Ascending aorta (tissue), 2 donors: ENCODE measurements at regions of chr3 and their contacts with region 1.

Region 1: GRCh38 chr3:11601446-11602238 is 42.1 kb downstream of the VGLL4 start:
- DNase-seq: peak; percentile 35 to 89
- H3K4me3 ChIP-seq: peak overlapping the region in 1 of 2 donors; percentile 37
- H3K27ac ChIP-seq: peak overlapping the region; percentile 85 to 91
- H3K4me1 ChIP-seq: peaks cover 14 to 51% of the 10 kb centered on the region in 2 donors
- H3K27me3 ChIP-seq: no peaks in the 10 kb centered on the region
- CTCF ChIP-seq: no peak

Region 2: DNA sequence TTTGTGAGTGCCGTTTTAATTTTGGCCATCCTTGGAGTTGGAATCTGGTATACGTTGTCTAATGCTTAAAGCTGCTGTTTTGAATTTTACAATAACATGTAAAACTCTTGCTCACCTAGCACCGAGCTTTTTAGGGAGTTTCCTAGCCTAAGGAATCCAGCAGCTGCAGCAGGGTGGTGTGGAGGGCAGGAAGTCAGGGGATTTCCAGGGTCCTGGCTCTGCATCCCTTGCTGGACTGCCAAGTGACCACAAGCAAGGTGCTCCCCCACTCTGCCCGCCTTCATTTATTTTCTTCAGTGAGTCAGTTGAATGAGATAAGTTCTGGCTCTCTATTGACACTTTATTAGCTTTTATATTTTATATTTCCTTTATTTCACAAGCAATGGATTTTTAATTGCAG is 215.8 kb before region 1 on chr3:
- intact Hi-C with region 1: loop called (anchors 5 kb)
- DNase-seq: no peak
- H3K4me3 ChIP-seq: no peak overlapping the region
- H3K27ac ChIP-seq: peak overlapping the region; percentile 13 to 24
- H3K4me1 ChIP-seq: peaks cover 0 to 32% of the 10 kb centered on the region in 2 donors
- H3K27me3 ChIP-seq: no peaks in the 10 kb centered on the region
- CTCF ChIP-seq: no peak

Region 3: GRCh38 chr3:11465744-11466616 is 135.7 kb before region 1 on chr3:
- intact Hi-C with region 1: loop called (anchors 5 kb)
- DNase-seq: peak in 1 of 2 donors; percentile 90
- H3K4me3 ChIP-seq: peak overlapping the region in 1 of 2 donors; percentile 32
- H3K27ac ChIP-seq: peak overlapping the region; percentile 91 to 92
- H3K4me1 ChIP-seq: peaks cover 4 to 33% of the 10 kb centered on the region in 2 donors
- H3K27me3 ChIP-seq: no peaks in the 10 kb centered on the region
- CTCF ChIP-seq: no peak

Region 4: GRCh38 chr3:11568503-11569155 is 33.0 kb before region 1 on chr3:
- intact Hi-C with region 1: loop called (anchors 1 kb)
- DNase-seq: peak; percentile 70 to 97
- H3K4me3 ChIP-seq: peak overlapping the region; percentile 29 to 54
- H3K27ac ChIP-seq: peak overlapping the region; percentile 97 to 99
- H3K4me1 ChIP-seq: peaks cover 16 to 55% of the 10 kb centered on the region in 2 donors
- H3K27me3 ChIP-seq: no peaks in the 10 kb centered on the region
- CTCF ChIP-seq: no peak

Region 5: GRCh38 chr3:11643605-11644087 is 42.0 kb after region 1 on chr3 and contains the start of gene VGLL4:
- intact Hi-C with region 1: loop called (anchors 2 kb)
- DNase-seq: peak; percentile 50 to 93
- H3K4me3 ChIP-seq: peak within 1 kb of the TSS; percentile 79 to 82
- H3K27ac ChIP-seq: peak within 1 kb of the TSS; percentile 94 to 98
- H3K4me1 ChIP-seq: peaks cover 10 to 22% of the 10 kb centered on the region in 2 donors
- H3K27me3 ChIP-seq: no peaks in the 10 kb centered on the region
- CTCF ChIP-seq: peak in 1 of 3 experiments; percentile 11
- total RNA-seq, gene VGLL4: 146 TPM

Region 6: GRCh38 chr3:11719406-11720230 is 118.0 kb after region 1 on chr3:
- intact Hi-C with region 1: loop called (anchors 2 kb)
- DNase-seq: peak; percentile 16 to 83
- H3K4me3 ChIP-seq: peak overlapping the region; percentile 70 to 93
- H3K27ac ChIP-seq: peak overlapping the region; percentile 84 to 98
- H3K4me1 ChIP-seq: peaks cover 0 to 14% of the 10 kb centered on the region in 2 donors
- H3K27me3 ChIP-seq: no peaks in the 10 kb centered on the region
- CTCF ChIP-seq: no peak